ENCODE measurements at regions of chr3 and their contacts with region 1.

Region 1: DNA sequence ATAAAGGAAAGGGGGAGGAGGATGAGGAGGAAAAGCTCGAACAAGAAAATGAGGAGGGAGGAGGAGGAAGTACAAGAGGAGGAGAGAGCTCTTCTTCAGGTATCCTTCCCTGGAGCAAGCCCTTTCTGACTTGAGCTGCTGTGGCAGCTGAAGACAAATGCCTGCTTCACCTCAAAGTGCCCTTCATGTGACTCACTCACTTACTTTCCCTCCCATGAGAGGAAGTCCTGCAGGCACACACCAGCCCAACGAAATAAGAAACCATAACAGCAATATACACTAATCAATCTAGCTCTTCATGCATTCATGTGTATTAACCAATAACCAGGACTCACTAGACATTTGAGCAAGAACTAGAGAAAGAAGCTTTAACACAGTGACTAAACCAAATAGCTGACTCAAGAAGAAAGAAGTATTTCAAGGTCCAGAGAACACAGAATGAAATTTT is 251.9 kb downstream of the IGSF11 start:
- DNase-seq: peak; percentile 44
- CTCF ChIP-seq: no peak

Region 2: GRCh38 chr3:118760585-118761290 is 22.0 kb before region 1 on chr3:
- CTCF ChIA-PET with region 1: interaction called, 10 read pairs
- POLR2A ChIA-PET with region 1: interaction called, 3 read pairs
- DNase-seq: peak; percentile 17
- CTCF ChIP-seq: peak; percentile 35

Region 3: GRCh38 chr3:118766306-118766669 is 16.5 kb before region 1 on chr3:
- CTCF ChIA-PET with region 1: interaction called, 10 read pairs
- POLR2A ChIA-PET with region 1: interaction called, 3 read pairs
- DNase-seq: no peak
- CTCF ChIP-seq: no peak

Region 4: GRCh38 chr3:118772547-118773011 is 10.2 kb before region 1 on chr3:
- CTCF ChIA-PET with region 1: interaction called, 10 read pairs
- POLR2A ChIA-PET with region 1: no interaction called
- DNase-seq: peak; percentile 35
- CTCF ChIP-seq: no peak

Region 5: GRCh38 chr3:118987477-118987876 is 204.7 kb after region 1 on chr3:
- CTCF ChIA-PET with region 1: no interaction called
- POLR2A ChIA-PET with region 1: no interaction called
- DNase-seq: no peak
- CTCF ChIP-seq: no peak